ENCODE measurements at regions of chr22 and their contacts with region 1.

Region 1: DNA sequence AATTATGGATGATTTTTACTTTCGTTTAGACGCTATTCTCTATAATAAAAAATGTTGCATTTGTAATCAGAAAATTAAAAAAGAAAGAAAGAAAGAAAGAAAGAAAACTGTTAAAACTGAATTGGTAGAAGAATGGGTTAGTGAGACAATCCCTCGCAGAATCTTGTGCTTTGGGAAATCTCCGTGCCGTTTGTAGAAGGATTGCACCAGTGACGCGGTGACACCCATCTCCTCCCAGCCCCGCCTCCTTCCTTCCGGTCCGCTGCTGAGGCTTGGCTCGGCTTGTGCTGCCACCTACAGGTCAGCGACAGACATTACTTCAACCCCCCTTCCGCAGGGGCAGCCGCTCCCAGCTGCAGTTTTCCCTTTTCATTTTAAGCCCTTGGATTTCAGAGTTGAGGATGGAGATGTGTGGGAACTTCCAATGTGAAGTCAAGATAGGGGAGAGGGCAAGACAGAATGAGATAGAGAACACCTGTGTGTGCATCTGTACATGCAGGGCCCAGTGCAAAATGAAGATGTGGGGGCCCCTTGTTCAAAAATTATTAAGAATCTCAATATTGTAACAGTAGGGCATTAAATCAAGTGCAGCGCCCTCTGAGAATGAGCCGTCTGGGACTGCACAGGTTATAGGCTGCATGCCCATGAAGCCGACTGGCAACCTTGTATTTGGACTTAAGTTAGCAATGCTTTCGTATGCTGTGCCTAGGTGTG is 41.1 kb downstream of the TST start:
- DNase-seq: peak; percentile 94
- ATAC-seq: peak; percentile 90
- H3K4me3 Mint-ChIP-seq: peak overlapping the region; percentile 80
- H3K27ac Mint-ChIP-seq: peak overlapping the region; percentile 87
- H3K4me1 Mint-ChIP-seq: peaks cover 18% of the 10 kb centered on the region
- H3K27me3 Mint-ChIP-seq: peaks cover 3% of the 10 kb centered on the region

Region 2: DNA sequence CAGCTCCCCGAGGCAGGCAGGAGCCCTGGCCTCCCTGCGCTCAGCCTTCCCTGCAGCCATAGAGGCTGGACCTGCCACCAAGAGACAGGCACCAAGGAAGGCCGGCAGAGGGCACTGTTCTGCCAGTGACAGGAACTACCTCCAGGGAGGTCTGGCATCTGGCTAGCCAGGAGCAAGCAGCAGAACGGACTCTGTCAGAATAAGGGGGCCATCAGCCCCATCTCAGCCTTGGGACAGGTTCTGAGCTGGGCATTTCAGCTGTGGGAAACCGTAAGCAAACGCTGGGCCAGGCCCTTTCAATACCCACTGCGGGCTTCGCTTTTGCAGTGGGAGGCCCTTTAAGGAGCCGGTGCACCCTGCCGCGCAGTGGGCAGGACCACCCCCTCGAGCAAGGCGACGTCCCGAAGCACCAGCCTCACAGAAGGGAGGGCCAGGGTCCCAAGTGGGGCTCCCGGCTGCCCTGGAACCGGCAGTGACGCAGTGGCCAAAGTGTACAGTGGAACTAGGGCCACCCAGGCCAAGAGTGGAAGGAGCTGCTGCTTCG is 220.4 kb before region 1 on chr22:
- CTCF ChIA-PET with region 1: interaction called, 26 read pairs
- DNase-seq: peak; percentile 86
- ATAC-seq: peak; percentile 93
- H3K4me3 Mint-ChIP-seq: no peak overlapping the region
- H3K27ac Mint-ChIP-seq: no peak overlapping the region
- H3K4me1 Mint-ChIP-seq: no peaks in the 10 kb centered on the region
- H3K27me3 Mint-ChIP-seq: peaks cover 10% of the 10 kb centered on the region

Region 3: DNA sequence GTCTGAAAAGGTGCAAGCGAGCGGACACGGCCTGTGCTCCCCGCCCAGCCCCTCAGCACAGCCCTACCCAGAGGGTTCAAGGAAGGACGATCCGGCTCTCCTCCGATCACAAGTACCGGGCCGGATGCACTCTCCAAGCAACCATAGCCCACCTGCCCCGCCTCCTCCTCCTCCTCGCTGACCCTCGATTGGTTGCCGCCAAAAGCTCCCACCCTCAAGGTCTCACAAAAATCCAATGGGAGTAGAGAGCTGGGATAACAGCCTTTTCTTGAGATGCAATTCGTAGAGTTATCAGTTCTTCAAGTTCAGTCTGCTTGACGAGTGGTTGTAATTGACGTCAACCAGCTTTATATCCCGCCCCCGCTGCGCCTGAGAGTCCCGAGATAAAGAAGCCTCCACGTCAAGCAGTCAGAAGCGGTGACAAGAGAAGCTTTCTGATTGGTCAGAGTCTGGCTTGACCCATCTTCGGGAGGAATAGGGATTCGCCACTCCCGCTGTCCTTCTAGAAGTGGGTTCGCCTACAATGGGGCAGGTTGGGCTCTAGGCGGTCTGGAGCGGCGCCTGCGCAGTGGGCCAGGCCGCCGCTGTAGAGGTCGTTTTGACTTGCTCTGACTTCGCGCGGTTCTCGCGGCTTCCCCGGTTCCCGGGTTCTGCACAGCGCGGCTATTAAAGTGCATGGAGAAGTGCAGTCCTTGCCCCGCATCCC is 202.0 kb before region 1 on chr22 and contains the start of gene IFT27:
- CTCF ChIA-PET with region 1: interaction called, 143 read pairs
- DNase-seq: peak; percentile 99
- ATAC-seq: peak; percentile 93
- H3K4me3 Mint-ChIP-seq: peak within 1 kb of the TSS; percentile 85
- H3K27ac Mint-ChIP-seq: peak within 1 kb of the TSS; percentile 92
- H3K4me1 Mint-ChIP-seq: peaks cover 35% of the 10 kb centered on the region
- H3K27me3 Mint-ChIP-seq: no peaks in the 10 kb centered on the region
- total RNA-seq, gene IFT27: 30.3 to 33.7 TPM

Region 4: GRCh38 chr22:36790648-36791047 is 187.5 kb before region 1 on chr22:
- CTCF ChIA-PET with region 1: interaction called, 13 read pairs
- DNase-seq: peak; percentile 80
- ATAC-seq: peak; percentile 99
- H3K4me3 Mint-ChIP-seq: no peak overlapping the region
- H3K27ac Mint-ChIP-seq: peak overlapping the region; percentile 13
- H3K4me1 Mint-ChIP-seq: peaks cover 13% of the 10 kb centered on the region
- H3K27me3 Mint-ChIP-seq: peaks cover 27% of the 10 kb centered on the region

Region 5: GRCh38 chr22:36873680-36874537 is 104.2 kb before region 1 on chr22:
- CTCF ChIA-PET with region 1: interaction called, 14 read pairs
- DNase-seq: peak; percentile 84
- ATAC-seq: peak; percentile 87
- H3K4me3 Mint-ChIP-seq: no peak overlapping the region
- H3K27ac Mint-ChIP-seq: peak overlapping the region; percentile 95
- H3K4me1 Mint-ChIP-seq: peaks cover 35% of the 10 kb centered on the region
- H3K27me3 Mint-ChIP-seq: no peaks in the 10 kb centered on the region

Region 6: DNA sequence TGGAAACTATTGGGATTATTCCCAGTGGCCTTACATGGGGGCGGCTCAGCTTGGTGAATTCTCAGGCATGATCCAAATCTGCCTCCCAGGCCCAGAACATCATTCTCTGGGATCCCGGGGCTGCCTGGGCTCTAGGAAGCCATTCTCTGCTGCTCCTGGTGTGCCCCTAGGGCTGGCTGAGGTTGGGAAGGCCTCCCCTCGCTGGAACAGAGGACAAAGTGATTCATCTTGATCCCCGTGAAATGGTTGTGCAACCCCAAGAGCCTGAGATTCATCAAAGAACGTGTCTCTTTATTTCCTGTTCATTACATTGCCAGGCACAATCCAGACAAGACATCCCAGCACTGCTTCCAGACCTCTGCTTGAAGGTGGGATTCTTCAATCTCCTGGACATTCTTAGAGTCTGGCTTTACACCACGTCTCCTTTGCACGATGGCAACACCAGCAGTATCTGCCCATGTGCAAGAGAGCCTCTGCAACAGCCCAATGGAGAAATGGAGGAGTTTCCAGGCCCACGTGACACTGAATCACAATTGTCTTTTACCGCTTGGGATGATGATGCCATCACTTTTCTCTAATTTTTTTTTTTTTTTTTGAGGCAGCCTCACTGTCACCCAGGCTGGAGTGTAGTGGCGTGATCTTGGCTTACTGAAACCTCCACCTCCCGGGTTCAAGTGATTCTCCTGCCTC is 11.1 kb before region 1 on chr22:
- CTCF ChIA-PET with region 1: interaction called, 21 read pairs
- DNase-seq: no peak
- ATAC-seq: no peak
- H3K4me3 Mint-ChIP-seq: no peak overlapping the region
- H3K27ac Mint-ChIP-seq: no peak overlapping the region
- H3K4me1 Mint-ChIP-seq: peaks cover 8% of the 10 kb centered on the region
- H3K27me3 Mint-ChIP-seq: peaks cover 16% of the 10 kb centered on the region

Region 7: DNA sequence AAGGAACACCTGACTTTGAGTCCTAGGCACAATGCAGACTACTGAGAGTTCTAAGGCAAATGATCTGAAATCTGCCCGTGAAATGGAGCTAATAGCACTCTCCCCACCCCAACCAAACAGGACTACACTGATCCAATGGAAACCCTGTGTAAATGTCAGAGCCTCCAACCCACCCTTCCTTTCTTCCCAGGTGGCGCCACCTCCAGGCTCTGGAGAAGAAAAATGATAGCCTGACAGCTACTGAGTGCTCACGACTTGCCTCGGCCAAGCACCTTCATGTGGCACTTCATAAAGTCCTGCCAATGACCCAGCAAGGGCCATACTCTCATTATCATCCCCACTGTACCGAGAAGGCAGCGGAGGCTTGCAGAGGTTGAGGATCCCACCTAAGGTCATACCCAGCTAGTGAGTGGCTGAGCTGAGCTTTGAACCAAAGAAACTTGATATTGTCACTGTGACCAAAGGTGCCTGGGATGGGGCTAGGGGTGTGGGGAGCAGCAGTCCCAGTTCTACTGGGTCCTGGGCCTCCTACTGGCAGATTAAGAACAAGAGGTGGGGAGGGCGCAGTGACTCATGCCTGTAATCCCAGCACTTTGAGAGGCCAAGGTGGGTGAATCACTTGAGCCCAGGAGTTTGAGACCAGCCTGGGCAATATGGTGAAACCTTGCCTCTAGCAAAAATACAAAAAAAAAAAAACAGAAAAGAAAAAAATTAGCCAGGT is 20.7 kb after region 1 on chr22:
- CTCF ChIA-PET with region 1: interaction called, 10 read pairs
- DNase-seq: no peak
- ATAC-seq: no peak
- H3K4me3 Mint-ChIP-seq: no peak overlapping the region
- H3K27ac Mint-ChIP-seq: no peak overlapping the region
- H3K4me1 Mint-ChIP-seq: no peaks in the 10 kb centered on the region
- H3K27me3 Mint-ChIP-seq: peaks cover 25% of the 10 kb centered on the region

Region 8: DNA sequence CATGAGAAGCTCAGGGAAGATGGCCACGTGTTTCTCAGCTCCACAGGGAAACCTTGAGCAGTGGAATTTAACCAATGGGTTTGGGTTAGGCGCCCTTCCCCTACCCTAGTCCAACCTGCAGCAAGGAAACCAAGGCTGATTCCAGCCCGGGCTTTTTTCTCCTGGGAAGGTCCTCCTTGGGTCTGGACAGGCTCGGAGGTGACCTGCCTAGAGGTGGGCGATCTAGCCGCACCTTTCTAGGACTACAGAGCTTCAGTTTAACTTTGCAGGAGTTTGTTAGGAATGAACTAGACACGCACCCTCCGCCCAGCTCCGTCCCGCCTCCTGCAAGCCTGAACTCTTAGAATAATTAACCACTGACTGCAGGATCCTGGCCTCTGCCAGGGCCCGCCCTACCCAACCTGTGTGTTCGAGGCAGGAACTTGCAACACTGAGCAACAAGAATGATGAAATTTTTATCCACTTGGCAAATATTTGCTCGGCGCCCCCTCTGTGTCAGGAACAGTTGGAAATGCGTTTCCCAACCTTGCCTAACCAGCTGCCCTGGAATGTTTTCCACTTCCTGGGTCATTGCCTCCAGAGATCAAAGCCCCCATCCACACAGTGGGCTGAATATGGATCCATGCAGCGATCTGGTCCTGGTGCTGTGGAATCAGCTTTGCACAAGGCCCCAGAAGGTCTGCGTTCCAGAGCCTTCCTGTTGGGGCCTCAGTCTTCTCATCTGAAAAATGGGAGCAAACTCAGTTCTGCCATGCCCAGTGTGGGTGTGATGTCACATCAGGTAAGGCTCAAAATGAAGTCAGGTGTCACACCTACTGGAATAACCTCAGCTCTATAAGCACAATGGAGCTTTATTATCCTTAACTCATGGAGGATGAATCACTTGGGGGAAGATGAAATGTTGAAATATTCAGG is 54.7 kb after region 1 on chr22:
- CTCF ChIA-PET with region 1: no interaction called
- DNase-seq: no peak
- ATAC-seq: no peak
- H3K4me3 Mint-ChIP-seq: no peak overlapping the region
- H3K27ac Mint-ChIP-seq: no peak overlapping the region
- H3K4me1 Mint-ChIP-seq: no peaks in the 10 kb centered on the region
- H3K27me3 Mint-ChIP-seq: peaks cover 24% of the 10 kb centered on the region

Region 9: GRCh38 chr22:37086184-37086583 is 108.1 kb after region 1 on chr22:
- CTCF ChIA-PET with region 1: no interaction called
- DNase-seq: no peak
- ATAC-seq: no peak
- H3K4me3 Mint-ChIP-seq: no peak overlapping the region
- H3K27ac Mint-ChIP-seq: no peak overlapping the region
- H3K4me1 Mint-ChIP-seq: peaks cover 45% of the 10 kb centered on the region
- H3K27me3 Mint-ChIP-seq: no peaks in the 10 kb centered on the region